PC-9 (cell line): ENCODE measurements at regions of chr1 and their contacts with region 1.

Region 1: GRCh38 chr1:147837129-147837963 is 65.2 kb upstream of the GJA8 start:
- DNase-seq: peak in 1 of 2 experiments; percentile 37
- H3K4me3 ChIP-seq: no peak overlapping the region
- H3K27ac ChIP-seq: peak overlapping the region; percentile 91
- H3K4me1 ChIP-seq: peaks cover 65% of the 10 kb centered on the region
- H3K27me3 ChIP-seq: no peaks in the 10 kb centered on the region
- CTCF ChIP-seq: no peak

Region 2: DNA sequence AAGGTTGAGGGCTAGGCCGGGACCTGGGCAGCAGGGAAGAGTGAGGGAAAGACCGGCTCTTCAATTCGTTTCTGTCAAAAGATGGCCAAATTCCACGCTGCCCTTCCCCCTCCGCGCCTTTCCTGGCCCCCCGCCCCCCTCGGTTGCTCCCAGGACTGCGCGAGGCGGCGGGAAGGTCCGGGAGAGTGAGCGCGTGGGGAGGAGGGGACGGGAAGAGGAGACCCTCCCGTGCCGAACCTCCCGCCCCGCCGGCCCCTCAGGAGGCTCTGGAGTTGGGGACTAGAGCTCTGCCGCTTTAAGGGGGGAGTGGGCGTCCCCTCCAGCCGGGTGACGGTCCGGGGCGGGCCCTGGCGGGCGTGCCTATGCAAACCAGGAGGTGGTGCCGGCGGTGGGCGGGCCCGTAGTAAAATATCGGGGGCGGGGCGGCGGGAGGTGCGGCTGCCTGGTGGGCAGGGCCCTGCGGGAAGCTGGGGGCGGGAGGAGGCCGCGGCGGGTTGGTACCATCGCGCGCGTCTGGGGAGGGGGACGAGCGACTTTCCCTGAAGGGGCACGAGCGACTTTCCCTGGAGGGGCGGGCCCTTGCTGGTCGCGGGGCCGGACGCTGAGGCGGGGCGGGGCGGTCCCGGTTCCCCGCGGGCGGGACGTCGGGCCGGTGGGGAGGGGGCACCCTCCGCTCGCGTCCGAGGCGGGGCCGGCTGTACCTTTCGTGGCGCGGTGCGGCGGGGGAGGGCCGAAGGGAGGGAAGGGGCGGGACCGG is 237.8 kb before region 1 on chr1:
- CTCF ChIA-PET with region 1: no interaction called
- POLR2A ChIA-PET with region 1: interaction called, 14 read pairs
- intact Hi-C with region 1: no loop called
- DNase-seq: peak; percentile 80 to 97
- H3K4me3 ChIP-seq: peak overlapping the region; percentile 65
- H3K27ac ChIP-seq: no peak overlapping the region
- H3K4me1 ChIP-seq: peaks cover 15% of the 10 kb centered on the region
- H3K27me3 ChIP-seq: no peaks in the 10 kb centered on the region
- CTCF ChIP-seq: no peak

Region 3: DNA sequence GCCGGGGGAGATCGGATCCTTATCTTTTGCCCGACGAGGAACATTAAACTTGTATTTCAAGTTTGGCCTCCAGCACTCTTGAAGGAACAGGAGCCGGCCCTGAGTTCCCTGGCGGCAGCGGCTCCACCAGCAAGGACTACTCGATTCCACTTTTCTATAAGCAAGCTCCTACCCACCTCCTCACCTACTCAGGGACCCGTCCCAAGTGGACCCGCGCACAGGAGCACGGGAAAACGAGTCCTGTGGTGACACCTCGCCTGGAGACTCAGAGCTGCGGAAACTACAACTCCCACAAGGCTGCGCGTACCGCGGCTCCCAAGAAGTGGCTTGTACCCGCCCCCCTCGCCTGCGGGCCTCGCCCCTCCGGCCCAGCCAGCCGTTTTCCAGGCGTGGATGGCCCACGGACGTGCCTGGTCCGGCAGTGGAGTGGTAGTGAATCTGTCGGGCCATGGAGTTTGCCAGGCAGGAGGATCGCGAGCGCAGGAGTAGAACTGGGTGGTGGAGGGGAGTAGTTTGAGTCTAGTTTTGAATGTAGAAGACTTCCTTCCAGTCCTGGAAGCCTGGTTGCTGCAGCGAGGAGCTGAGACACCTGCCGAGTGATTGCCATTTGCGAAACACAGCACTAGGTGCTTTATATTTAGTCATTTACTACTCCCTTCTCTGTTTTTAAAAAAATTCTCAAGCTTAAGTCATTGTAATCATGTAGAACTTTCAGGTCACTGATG is 166.9 kb before region 1 on chr1 and contains the start of gene ACP6:
- CTCF ChIA-PET with region 1: no interaction called
- POLR2A ChIA-PET with region 1: interaction called, 10 read pairs
- intact Hi-C with region 1: loop called (anchors 1 kb)
- DNase-seq: peak; percentile 92 to 93
- H3K4me3 ChIP-seq: peak within 1 kb of the TSS; percentile 65
- H3K27ac ChIP-seq: peak within 1 kb of the TSS; percentile 66
- H3K4me1 ChIP-seq: peaks cover 46% of the 10 kb centered on the region
- H3K27me3 ChIP-seq: no peaks in the 10 kb centered on the region
- CTCF ChIP-seq: no peak
- total RNA-seq, gene ACP6: 71.4 and 85.3 TPM in 2 replicates

Region 4: GRCh38 chr1:147717063-147717565 is 120.2 kb before region 1 on chr1:
- CTCF ChIA-PET with region 1: no interaction called
- POLR2A ChIA-PET with region 1: interaction called, 5 read pairs
- intact Hi-C with region 1: loop called (anchors 2 kb)
- DNase-seq: peak; percentile 82 to 100
- H3K4me3 ChIP-seq: no peak overlapping the region
- H3K27ac ChIP-seq: peak overlapping the region; percentile 82
- H3K4me1 ChIP-seq: peaks cover 73% of the 10 kb centered on the region
- H3K27me3 ChIP-seq: no peaks in the 10 kb centered on the region
- CTCF ChIP-seq: no peak

Region 5: DNA sequence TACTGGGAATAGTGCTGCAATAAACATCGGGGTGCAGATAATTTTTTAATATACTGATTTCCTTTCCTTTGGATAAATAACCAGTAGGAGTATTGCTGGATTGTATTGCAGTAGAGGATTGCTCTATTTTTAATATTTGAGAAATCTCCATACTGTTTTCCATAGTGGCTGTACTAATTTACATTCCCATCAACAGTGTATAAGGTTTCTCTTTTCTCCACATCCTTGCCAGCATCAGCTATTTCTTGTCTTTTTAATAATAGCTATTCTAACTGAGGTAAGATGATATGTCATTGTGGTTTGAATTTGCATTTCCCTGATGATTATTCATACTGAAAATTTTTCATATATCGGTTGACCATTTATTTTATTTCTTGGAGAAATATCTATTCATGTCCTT is 108.0 kb before region 1 on chr1:
- CTCF ChIA-PET with region 1: no interaction called
- POLR2A ChIA-PET with region 1: no interaction called
- intact Hi-C with region 1: no loop called
- DNase-seq: no peak
- H3K4me3 ChIP-seq: no peak overlapping the region
- H3K27ac ChIP-seq: no peak overlapping the region
- H3K4me1 ChIP-seq: peaks cover 5% of the 10 kb centered on the region; the same call in 1 of the 2 replicates
- H3K27me3 ChIP-seq: no peaks in the 10 kb centered on the region
- CTCF ChIP-seq: no peak

Region 6: DNA sequence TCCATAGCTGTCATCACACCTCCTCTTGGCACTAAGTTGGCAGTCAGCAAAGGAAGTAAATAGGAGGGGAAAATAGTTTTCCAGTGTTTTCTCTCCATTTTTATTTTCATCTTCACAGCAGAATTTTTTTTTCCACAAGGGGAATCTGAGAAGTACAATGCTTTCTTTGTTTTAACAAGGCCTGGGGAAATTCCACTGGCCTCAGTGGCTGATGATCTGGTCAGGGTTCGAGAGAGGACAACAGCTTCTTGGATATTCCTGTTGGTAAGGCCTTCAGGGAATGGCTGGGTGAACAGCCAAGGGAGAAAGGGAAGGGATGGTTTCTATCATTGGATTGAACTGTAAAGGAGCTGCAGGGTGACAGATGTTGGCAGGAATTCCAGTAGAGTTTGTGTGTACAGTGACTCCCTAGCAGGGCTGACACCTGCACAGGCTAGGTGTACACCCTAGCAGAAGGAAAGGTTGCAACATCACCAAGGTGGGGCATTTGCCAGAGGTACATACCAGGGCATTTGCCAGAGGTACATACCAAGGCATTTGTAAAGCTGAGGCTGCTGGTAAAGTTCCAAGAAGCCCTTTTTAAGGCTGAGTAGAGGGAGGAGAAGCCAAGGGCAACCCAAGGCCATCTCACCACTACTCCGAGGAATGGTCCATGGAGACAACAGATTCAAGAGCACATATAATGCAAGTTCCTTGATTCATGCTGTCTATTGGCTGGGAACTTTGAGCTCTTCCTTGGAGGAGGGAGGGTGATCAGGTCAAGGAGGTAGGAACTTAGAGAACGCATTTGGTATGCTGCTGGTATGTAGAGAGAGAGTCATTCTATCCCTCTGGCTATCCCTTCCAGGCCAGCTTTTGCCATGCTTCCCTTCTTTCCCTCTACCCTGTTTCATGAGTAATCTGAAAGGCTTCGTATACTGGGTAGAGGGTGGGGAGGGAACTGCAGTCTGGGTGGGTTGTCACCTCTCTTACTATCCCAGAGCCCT is 80.0 kb before region 1 on chr1:
- CTCF ChIA-PET with region 1: no interaction called
- POLR2A ChIA-PET with region 1: interaction called, 6 read pairs
- intact Hi-C with region 1: loop called (anchors 1 kb)
- DNase-seq: peak; percentile 85 to 98
- H3K4me3 ChIP-seq: peak overlapping the region; percentile 19; the same call in 1 of the 2 replicates
- H3K27ac ChIP-seq: peak overlapping the region; percentile 92
- H3K4me1 ChIP-seq: peaks cover 75% of the 10 kb centered on the region
- H3K27me3 ChIP-seq: no peaks in the 10 kb centered on the region
- CTCF ChIP-seq: no peak

Region 7: GRCh38 chr1:147781056-147781471 is 56.3 kb before region 1 on chr1:
- CTCF ChIA-PET with region 1: no interaction called
- POLR2A ChIA-PET with region 1: interaction called, 3 read pairs
- intact Hi-C with region 1: loop called (anchors 1 kb)
- DNase-seq: peak; percentile 41 to 96
- H3K4me3 ChIP-seq: no peak overlapping the region; the same call in 1 of the 2 replicates
- H3K27ac ChIP-seq: peak overlapping the region; percentile 72
- H3K4me1 ChIP-seq: peaks cover 41% of the 10 kb centered on the region
- H3K27me3 ChIP-seq: no peaks in the 10 kb centered on the region
- CTCF ChIP-seq: no peak